ENCODE measurements at regions of chr1 and their contacts with region 1.

Region 1: DNA sequence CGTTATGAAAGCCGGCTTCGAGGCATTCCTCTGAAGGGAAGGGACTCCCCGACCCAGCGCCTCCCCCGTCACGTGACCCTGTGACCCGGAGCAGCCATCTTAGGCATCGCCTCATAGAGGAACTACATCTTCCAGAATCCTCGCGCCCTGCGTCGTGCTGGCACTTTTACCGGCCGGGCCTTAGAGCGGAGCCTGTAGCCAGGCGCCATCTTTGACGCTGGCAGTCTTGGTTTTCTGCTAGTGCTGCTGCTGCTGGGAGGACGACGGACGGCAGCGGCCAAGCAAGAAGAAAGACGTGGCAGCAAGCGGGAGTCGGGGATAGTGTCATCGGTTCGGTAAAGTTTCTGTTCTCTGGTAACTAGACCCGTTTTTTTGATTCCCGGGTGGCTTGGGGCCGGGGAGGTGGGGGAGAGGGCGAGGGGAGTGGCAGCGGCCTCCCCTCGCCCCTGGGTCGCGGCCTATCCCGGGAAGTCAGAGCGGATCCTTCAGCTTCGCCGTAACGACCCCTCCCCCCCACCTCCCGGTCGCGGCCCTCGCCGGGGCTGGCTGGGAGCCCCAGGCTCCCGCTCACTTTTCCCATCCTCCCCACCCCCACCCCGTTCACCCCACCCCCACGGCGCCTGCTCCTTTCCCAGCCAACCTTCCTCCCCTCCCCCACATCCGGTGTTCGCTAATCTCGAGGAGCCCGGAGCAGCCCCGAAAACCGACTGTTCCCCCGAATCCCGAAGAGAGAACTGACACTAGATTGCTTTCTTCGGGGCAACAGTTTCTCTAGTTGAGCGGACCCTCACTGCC is at the starts of genes ZBED6 and ZC3H11A:
- DNase-seq: peak; percentile 100
- H3K4me3 Mint-ChIP-seq: peak within 1 kb of the TSS; percentile 96
- H3K27ac Mint-ChIP-seq: peak within 1 kb of the TSS; percentile 98
- H3K4me1 Mint-ChIP-seq: peaks cover 47% of the 10 kb centered on the region
- H3K27me3 Mint-ChIP-seq: no peaks in the 10 kb centered on the region
- total RNA-seq, gene ZBED6: 23.3 to 23.6 TPM
- total RNA-seq, gene ZC3H11A: 78.4 to 80.9 TPM

Region 2: GRCh38 chr1:203673550-203674427 is 121.8 kb before region 1 on chr1:
- CTCF ChIA-PET with region 1: no interaction called
- intact Hi-C with region 1: loop called (anchors 1 kb)
- DNase-seq: peak; percentile 84
- H3K4me3 Mint-ChIP-seq: peak overlapping the region; percentile 33
- H3K27ac Mint-ChIP-seq: peak overlapping the region; percentile 77
- H3K4me1 Mint-ChIP-seq: peaks cover 45% of the 10 kb centered on the region
- H3K27me3 Mint-ChIP-seq: no peaks in the 10 kb centered on the region

Region 3: GRCh38 chr1:203823306-203823705 is 27.7 kb after region 1 on chr1:
- CTCF ChIA-PET with region 1: no interaction called
- intact Hi-C with region 1: loop called (anchors 1 kb)
- DNase-seq: no peak
- H3K4me3 Mint-ChIP-seq: no peak overlapping the region
- H3K27ac Mint-ChIP-seq: peak overlapping the region; percentile 65
- H3K4me1 Mint-ChIP-seq: peaks cover 15% of the 10 kb centered on the region
- H3K27me3 Mint-ChIP-seq: no peaks in the 10 kb centered on the region

Region 4: GRCh38 chr1:203861379-203862184 is 65.9 kb after region 1 on chr1 and contains the start of gene SNRPE:
- CTCF ChIA-PET with region 1: no interaction called
- intact Hi-C with region 1: loop called (anchors 1 kb)
- DNase-seq: peak; percentile 98
- H3K4me3 Mint-ChIP-seq: peak within 1 kb of the TSS; percentile 100
- H3K27ac Mint-ChIP-seq: peak within 1 kb of the TSS; percentile 95
- H3K4me1 Mint-ChIP-seq: peaks cover 25% of the 10 kb centered on the region
- H3K27me3 Mint-ChIP-seq: no peaks in the 10 kb centered on the region
- total RNA-seq, gene SNRPE: 366 to 370 TPM

Measured in activated naive CD4-positive, alpha-beta T cell treated with anti-CD3 and anti-CD28 coated beads for 36 hours (primary cell).